Left cardiac atrium (tissue), 4 donors: ENCODE measurements at regions of chr6 and their contacts with region 1.

Region 1: DNA sequence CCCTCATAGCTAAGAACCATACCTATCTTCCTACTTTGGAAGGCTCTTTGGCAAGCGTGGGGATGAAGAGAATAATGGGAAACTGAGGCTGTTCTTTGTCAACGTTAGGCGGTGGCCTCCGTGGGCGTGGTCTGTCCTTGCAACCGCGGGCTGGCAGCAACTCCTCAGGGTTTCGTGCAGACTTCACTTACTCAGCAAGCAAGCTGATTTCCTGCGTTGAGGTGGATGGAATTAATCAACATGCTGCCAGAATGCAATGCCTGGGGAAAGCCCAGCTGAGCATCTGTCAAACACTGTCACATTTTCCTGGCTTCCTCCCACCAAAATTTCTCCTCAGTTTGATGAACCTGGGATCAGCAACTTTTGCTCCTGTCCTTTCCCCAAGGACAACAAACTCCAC is 9.2 kb upstream of the IL17F start:
- DNase-seq: no peak
- ATAC-seq: no peak

Region 2: GRCh38 chr6:52087498-52087999 is 165.9 kb before region 1 on chr6 and contains the start of gene PKHD1:
- intact Hi-C with region 1: loop called in 1 of 2 experiments (anchors 10 kb)
- DNase-seq: no peak
- ATAC-seq: no peak
- total RNA-seq, gene PKHD1: not detected